ENCODE measurements at regions of chr3 and their contacts with region 1.

Region 1: DNA sequence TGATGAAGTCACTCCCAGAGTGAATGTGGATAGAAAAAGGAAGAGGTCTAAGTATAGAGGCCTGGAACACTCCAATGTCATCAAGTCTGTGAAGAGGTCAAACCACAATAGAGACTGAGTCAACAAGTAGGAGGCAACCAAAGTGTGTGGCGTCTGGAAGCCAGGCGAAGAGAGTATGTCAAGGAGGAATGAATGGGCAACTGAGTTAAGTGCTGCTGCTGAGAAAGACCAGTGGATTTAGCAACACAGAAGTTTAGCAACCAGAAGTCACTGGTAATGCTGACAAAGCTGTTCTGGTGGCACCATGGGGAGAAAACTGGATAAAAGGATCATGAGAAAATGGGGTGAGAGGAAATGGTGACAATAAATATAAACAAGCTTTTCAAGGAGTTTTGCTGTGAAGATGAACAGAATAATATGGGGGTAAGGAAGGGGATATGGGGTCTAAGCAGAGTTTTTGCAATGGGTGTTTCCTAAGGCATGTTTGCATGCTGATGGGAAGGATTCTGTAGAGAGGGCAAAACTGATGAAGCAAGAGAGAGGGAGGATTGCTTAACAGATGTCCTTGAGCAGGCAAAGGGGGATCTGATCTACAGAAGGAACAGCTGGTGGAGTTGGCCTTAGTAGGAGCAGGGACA is 38.4 kb downstream of the PCOLCE2 start:
- DNase-seq: peak; percentile 37 to 75 (median 44)
- ATAC-seq: peak; percentile 96
- H3K4me3 ChIP-seq: no peak overlapping the region
- H3K27ac ChIP-seq: no peak overlapping the region
- H3K4me1 ChIP-seq: no peaks in the 10 kb centered on the region; a peak in 4 of 5 replicates
- H3K27me3 ChIP-seq: no peaks in the 10 kb centered on the region
- CTCF ChIP-seq: no peak
- EP300 ChIP-seq: peak; percentile 49; the same call in 1 of the 2 replicates
- POLR2A ChIP-seq: no peak
- RAD21 ChIP-seq: no peak

Region 2: DNA sequence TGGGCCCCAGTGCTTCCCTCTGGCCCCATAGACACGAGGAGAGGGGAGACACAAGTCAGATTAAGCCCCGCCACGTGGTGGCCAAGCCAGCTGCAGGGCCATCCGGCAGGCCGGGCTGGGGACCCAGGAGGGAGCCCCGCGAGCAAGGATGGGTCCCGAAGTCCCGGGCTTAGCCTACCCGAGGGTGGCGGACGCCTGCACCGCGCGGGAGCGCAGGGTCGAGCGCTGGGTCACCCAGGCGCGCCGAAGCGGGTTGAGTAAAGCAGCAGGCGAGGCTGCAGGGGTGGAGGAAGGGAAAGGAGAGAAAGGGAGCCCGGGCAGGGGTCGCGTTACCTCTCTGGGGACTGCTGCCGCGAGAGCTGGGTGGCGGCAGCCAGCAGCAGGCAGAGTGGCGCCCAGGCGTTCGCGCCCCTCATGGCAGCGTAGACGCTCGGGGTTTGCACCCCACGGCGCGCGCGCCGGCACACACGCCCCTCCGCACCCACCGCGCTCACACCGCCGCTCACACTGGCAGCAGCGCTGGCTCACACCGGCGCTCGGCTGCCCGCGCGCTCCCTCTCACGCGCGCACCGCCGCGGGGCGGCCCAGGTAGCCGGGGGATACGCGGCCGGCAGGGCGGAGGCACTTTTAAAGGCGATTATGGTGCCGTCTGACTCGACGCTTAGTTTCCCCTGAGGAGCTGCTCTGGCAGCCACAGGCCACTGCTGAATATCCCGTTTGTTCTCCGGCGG is 38.1 kb after region 1 on chr3 and contains the start of gene PCOLCE2:
- CTCF ChIA-PET with region 1: no interaction called
- POLR2A ChIA-PET with region 1: interaction called, 3 read pairs
- in situ Hi-C with region 1: no loop called
- intact Hi-C with region 1: loop called (anchors 5 kb)
- DNase-seq: peak; percentile 36 to 39 (median 38)
- ATAC-seq: peak; percentile 76
- H3K4me3 ChIP-seq: peak within 1 kb of the TSS; percentile 44
- H3K27ac ChIP-seq: no peak within 1 kb of the TSS
- H3K4me1 ChIP-seq: peaks cover 5 to 14% of the 10 kb centered on the region in 2 experiments; a peak in 3 of 5 replicates
- H3K27me3 ChIP-seq: peaks cover 0 to 11% of the 10 kb centered on the region in 2 experiments; a peak in 1 of 5 replicates
- CTCF ChIP-seq: no peak
- EP300 ChIP-seq: no peak
- POLR2A ChIP-seq: no peak
- RAD21 ChIP-seq: no peak
- polyA plus RNA-seq, gene PCOLCE2: 0.18 to 0.39 TPM

Region 3: GRCh38 chr3:142904639-142905436 is 54.3 kb after region 1 on chr3:
- CTCF ChIA-PET with region 1: no interaction called
- POLR2A ChIA-PET with region 1: no interaction called
- in situ Hi-C with region 1: no loop called
- intact Hi-C with region 1: loop called (anchors 5 kb)
- DNase-seq: peak in 2 of 4 experiments; percentile 35 to 49
- ATAC-seq: peak; percentile 81
- H3K4me3 ChIP-seq: no peak overlapping the region
- H3K27ac ChIP-seq: no peak overlapping the region
- H3K4me1 ChIP-seq: no peaks in the 10 kb centered on the region; a peak in 2 of 5 replicates
- H3K27me3 ChIP-seq: 0 out of 5 replicates have a peak, but pooled peaks cover 0 to 3% of the 10 kb centered on the region in 2 experiments
- CTCF ChIP-seq: peak; percentile 36 to 56 (median 53); a peak in 4 of 6 replicates
- EP300 ChIP-seq: no peak
- POLR2A ChIP-seq: no peak
- RAD21 ChIP-seq: peak; percentile 63 to 77